Panc1 (cell line): ENCODE measurements at regions of chr2 and their contacts with region 1.

Region 1: GRCh38 chr2:186459009-186459408 is 27.1 kb upstream of the ZC3H15 start:
- DNase-seq: no peak
- ATAC-seq: no peak
- H3K4me3 ChIP-seq: no peak overlapping the region
- H3K27ac ChIP-seq: no peak overlapping the region
- H3K4me1 ChIP-seq: no peaks in the 10 kb centered on the region
- H3K27me3 ChIP-seq: no peaks in the 10 kb centered on the region
- CTCF ChIP-seq: peak; percentile 59; the same call in 1 of the 2 replicates

Region 2: DNA sequence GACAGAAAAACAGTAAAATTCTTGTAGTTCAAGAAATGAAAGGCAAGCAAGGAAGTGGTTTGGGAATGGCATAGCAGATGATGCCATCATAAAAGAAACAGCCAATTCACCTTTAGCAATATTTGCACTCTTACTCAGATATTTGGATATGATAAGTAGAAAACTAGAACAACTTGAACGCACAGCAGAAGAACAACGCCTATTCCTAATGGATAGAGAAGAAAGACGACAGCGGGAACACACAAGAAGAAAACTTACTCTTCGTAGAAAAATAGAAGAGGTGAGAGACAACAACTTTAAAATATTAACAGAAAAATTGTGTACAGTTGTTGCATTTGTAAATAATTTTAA is 712.5 kb before region 1 on chr2:
- CTCF ChIA-PET with region 1: no interaction called
- POLR2A ChIA-PET with region 1: no interaction called
- in situ Hi-C with region 1: no loop called
- intact Hi-C with region 1: loop called (anchors 10 kb)
- DNase-seq: no peak
- ATAC-seq: no peak
- H3K4me3 ChIP-seq: no peak overlapping the region
- H3K27ac ChIP-seq: no peak overlapping the region
- H3K4me1 ChIP-seq: no peaks in the 10 kb centered on the region
- H3K27me3 ChIP-seq: no peaks in the 10 kb centered on the region
- CTCF ChIP-seq: no peak

Region 3: DNA sequence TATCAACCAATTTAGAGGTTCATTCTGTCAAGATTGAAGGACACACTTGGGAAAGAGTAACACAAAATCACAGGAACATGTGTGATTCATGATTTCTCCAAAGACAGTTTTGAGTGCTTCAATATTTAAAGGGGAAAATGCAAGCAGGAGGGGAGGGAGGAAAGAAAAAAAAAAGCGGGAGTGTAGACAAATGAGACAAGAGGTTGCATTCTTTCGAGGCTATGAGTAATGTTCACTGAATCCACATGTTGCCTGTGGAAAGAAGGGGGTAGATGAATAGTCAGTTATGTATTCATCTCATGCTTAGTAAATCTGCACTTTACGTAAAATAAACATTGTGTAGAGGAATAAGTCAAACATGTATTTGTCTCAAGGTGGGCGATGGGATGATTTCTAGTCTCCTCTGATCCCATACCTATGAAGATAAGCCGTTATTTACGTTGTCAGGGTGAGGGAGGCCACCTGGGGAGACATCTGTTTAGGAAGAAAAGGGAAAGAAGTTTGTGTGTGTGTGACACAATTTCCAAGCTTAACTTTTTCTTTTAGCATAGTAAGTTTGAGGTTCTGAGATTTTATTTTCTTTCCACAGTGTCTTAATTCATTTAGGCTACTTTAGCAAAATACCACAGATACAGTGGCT is 184.0 kb before region 1 on chr2:
- CTCF ChIA-PET with region 1: no interaction called
- POLR2A ChIA-PET with region 1: no interaction called
- in situ Hi-C with region 1: no loop called
- intact Hi-C with region 1: loop called (anchors 10 kb)
- DNase-seq: no peak
- ATAC-seq: no peak
- H3K4me3 ChIP-seq: no peak overlapping the region
- H3K27ac ChIP-seq: no peak overlapping the region
- H3K4me1 ChIP-seq: no peaks in the 10 kb centered on the region
- H3K27me3 ChIP-seq: no peaks in the 10 kb centered on the region
- CTCF ChIP-seq: no peak